Ascending aorta (tissue), 2 donors: ENCODE measurements at regions of chr5 and their contacts with region 1.

Region 1: GRCh38 chr5:172984243-172984953 is 827 bp downstream of the ATP6V0E1 start:
- DNase-seq: peak; percentile 39 to 92
- H3K4me3 ChIP-seq: peak overlapping the region; percentile 73 to 93
- H3K27ac ChIP-seq: peak overlapping the region; percentile 92 to 98
- H3K4me1 ChIP-seq: peaks cover 8 to 14% of the 10 kb centered on the region in 2 donors
- H3K27me3 ChIP-seq: no peaks in the 10 kb centered on the region
- CTCF ChIP-seq: peak; percentile 16 to 52 (median 48)

Region 2: DNA sequence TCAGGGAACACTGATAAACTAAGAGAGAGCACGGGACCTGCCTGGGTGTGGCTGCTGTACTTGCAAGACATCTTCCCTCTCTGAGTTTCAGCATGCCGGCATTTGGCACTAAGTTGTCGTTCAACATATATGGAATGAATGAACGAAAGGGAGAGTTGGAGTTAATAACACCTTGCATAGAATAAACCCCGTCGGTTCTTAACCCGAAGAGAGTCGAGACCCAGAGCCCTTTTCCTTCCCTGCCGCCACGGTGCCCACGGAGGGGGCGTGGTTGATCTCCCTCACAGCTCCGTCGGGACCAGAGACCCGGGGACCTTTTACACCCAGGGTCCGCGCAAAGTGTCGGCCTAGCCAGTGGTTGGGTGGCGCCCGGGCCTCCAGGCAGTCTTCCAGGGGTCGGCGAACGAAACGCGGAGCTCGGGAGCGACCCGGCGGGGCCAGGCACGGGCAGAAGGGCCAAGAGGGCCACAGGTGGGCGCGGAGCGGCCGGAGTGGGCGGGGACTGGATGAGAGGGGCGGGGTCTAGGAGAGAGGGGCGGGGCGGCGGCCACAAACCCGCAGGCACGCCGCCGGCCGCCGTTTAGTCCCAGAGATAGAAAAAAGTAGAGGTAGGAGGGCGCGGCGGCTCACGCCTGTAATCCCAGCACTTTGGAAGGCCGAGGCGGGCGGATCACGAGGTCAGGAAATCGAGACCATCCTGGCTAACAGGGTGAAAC is 25.9 kb before region 1 on chr5:
- intact Hi-C with region 1: loop called (anchors 2 kb)
- DNase-seq: peak in 1 of 2 donors; percentile 86
- H3K4me3 ChIP-seq: peak overlapping the region; percentile 67 to 69
- H3K27ac ChIP-seq: peak overlapping the region; percentile 87 to 95
- H3K4me1 ChIP-seq: peaks cover 6 to 44% of the 10 kb centered on the region in 2 donors
- H3K27me3 ChIP-seq: no peaks in the 10 kb centered on the region
- CTCF ChIP-seq: no peak

Region 3: DNA sequence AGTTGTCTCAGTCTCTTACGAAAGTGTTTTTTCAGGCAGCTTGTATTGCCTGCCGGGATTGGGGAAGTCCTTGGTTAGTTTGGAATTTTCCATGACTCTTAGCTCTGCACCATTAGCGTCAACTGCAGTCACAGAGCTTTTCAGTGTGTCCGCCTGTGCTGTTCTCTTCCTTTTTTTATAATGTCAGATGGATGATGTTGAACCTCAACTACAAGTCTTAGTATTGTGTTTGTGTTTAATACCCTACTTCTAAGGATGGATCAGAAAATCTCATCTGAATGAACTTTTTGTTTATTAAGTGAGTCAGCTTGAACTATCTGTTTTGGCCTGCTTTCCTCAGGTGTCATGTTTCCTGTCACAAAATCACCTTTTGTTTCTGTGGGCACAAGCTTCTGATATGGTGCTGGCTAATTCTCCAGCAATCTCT is 32.2 kb after region 1 on chr5:
- intact Hi-C with region 1: loop called (anchors 2 kb)
- DNase-seq: peak in 1 of 2 donors; percentile 75
- H3K4me3 ChIP-seq: peak overlapping the region in 1 of 2 donors; percentile 33
- H3K27ac ChIP-seq: peak overlapping the region; percentile 79 to 88
- H3K4me1 ChIP-seq: peaks cover 9 to 27% of the 10 kb centered on the region in 2 donors
- H3K27me3 ChIP-seq: no peaks in the 10 kb centered on the region
- CTCF ChIP-seq: no peak

Region 4: DNA sequence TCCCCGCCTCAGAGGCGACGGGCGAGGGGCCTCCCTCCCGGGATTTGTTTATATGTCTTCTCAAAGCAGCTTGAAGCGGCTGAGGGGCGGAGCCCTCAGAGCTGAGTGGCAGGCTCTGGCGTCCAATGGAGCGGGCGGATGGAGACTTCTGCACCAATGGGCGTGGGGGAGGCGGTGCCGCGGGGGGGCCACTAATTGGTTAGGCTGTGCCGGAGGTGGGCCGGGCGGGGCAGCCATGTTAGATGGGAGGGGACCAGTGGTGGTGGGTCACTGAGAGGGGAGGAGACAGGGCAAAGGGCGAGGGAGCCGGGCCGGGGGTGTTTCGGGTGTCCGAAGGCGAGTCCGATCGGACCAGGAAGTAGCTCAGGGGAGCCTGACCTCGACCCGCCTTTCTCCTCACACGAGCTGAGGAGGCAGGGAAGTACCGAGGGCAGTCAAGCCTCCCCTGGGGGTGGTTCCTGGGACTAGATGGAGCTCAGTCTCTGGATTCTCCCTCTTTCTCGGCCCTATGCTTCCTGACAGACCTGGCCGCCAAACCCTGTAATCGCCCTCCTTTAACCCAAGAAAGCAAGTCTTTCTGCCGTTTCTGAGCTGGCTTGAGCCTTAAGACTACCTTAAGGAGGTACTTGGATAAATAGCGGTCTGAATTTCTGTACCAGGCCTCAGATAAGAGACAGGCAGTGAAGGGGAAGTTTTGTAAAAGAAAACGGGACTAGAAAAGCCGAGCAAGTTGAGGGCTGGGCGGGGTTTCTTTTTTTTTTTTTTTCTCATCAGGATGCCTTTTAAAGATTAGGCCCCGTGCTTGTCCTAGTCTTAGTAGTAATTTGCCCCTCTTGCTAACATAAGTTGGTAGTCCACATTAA is 72.9 kb after region 1 on chr5:
- intact Hi-C with region 1: loop called (anchors 1 kb)
- DNase-seq: peak; percentile 98 to 100
- H3K4me3 ChIP-seq: peak overlapping the region; percentile 76 to 98
- H3K27ac ChIP-seq: peak overlapping the region; percentile 93 to 100
- H3K4me1 ChIP-seq: peaks cover 0 to 23% of the 10 kb centered on the region in 2 donors
- H3K27me3 ChIP-seq: no peaks in the 10 kb centered on the region
- CTCF ChIP-seq: peak; percentile 19 to 30 (median 21)

Region 5: DNA sequence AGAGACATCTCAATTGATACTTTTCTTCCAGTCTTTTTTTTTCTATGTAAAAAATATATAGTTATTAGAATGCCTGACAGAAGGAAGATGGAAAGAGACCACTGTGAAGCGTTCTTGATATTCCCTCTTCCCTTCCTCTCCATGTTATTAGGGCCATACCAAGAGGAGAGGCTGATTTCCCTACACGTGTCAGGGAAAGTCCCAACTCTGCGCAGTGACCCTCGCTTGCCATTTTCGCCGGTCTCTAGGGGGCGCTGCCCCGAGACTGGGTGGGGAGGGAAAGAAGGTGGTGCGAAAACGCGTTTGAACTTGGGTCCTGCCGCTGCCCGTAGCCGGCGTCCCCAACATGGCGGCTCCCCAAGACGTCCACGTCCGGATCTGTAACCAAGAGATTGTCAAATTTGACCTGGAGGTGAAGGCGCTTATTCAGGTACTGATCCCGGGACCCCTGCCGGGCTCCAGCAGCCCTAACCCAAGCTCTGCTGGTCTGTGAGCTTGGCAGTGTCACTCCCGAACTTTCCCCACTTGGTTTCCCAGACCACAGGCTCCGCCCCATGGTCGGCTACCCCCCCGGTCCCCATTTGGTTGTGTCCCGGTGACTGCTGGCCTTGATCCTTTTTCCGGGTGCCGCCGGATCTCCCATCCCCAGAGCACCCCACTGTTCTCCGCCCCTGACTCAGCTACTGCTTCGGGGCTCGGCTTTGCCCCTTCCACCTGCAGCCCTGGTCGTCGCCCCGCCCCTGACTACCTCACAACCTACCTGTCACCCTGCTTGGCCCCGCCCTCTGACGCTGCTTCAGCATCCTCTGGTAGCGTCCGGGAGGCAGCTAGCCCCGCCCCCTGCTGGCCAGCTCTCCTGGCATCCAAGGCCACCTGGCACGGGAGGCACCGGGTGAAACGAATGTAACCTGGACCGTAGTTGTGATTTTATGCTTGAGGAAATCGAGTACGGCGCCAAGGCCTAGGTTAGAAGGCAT is 160.1 kb after region 1 on chr5 and contains the start of gene BNIP1:
- intact Hi-C with region 1: loop called (anchors 1 kb)
- DNase-seq: peak; percentile 78 to 96
- H3K4me3 ChIP-seq: peak within 1 kb of the TSS; percentile 58 to 98
- H3K27ac ChIP-seq: peak within 1 kb of the TSS; percentile 82 to 86
- H3K4me1 ChIP-seq: peaks cover 0 to 4% of the 10 kb centered on the region in 2 donors
- H3K27me3 ChIP-seq: no peaks in the 10 kb centered on the region
- CTCF ChIP-seq: peak; percentile 82 to 91 (median 90)
- total RNA-seq, gene BNIP1: 11.3 TPM

Region 6: DNA sequence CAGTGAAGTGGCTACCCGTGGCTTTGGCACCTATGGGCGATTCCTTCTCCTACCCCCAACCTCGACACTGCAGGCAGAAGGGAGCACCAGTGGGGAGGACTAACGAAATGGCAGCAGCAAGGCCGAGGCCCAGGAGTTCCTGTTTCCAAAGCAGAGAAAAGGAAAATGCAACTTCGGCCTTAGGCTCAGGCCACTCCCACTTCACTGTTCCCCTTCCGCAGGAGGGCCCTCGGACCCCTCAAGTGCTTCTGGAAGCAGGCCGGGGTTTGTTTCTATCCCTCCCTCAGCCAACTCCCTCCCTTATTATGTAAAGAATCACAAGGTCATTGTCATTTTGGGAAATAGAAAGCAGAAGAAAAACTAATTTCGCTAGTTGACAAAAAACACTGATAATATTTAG is 287.0 kb after region 1 on chr5:
- intact Hi-C with region 1: no loop called
- DNase-seq: no peak
- H3K4me3 ChIP-seq: no peak overlapping the region
- H3K27ac ChIP-seq: no peak overlapping the region
- H3K4me1 ChIP-seq: no peaks in the 10 kb centered on the region
- H3K27me3 ChIP-seq: no peaks in the 10 kb centered on the region
- CTCF ChIP-seq: no peak

Region 7: DNA sequence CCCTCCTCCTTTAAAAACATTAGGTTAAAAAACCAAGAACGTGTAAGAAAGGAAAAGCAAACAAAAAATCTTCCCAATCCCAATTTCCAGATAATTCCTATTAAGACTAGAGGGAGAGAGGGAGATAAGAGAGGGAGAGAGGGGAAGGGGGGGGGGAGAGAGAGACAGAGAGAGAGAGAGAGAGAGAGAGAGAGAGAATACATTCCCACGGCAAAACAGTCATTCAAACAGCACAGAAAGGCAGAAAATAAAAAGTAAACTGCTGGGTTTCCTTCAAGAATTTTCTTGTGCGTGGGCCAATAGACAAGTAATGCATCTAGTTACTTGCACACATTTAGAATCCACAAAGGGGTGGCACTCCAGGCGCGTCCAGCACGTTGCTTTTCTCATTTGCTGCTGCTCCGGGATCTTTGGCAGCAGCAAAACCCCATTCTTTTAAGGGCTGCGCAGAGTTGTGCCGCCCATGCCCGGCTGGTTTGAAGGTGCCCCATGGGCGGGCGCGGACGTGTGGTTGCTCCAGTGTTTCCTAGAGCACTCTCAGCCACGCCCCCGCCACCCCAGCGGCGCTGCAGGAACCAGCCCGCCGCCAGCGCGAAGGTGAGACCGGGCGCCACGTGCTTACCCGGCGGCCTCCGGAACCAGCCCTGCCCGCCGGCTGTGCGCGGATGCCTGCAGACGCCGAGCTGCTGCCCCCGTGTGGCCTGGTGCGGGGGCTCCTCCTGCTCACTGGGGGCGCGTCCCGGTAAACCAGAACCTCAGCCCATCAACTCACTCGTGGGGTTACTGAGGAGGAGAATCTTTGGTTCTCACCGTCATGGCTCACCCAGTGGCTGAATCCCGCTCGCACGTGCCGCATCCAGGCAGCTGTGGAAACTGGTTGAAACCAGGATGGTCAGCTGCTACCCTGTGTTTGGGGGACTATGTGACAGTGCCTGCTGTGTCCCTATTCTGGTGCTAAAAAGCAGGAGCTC is 299.2 kb after region 1 on chr5:
- intact Hi-C with region 1: loop called (anchors 5 kb)
- DNase-seq: peak in 1 of 2 donors; percentile 66
- H3K4me3 ChIP-seq: peak overlapping the region; percentile 37 to 56
- H3K27ac ChIP-seq: no peak overlapping the region
- H3K4me1 ChIP-seq: peaks cover 3 to 4% of the 10 kb centered on the region in 2 donors
- H3K27me3 ChIP-seq: no peaks in the 10 kb centered on the region
- CTCF ChIP-seq: peak; percentile 45 to 74 (median 58)